ENCODE measurements at regions of chr2 and their contacts with region 1.

Region 1: DNA sequence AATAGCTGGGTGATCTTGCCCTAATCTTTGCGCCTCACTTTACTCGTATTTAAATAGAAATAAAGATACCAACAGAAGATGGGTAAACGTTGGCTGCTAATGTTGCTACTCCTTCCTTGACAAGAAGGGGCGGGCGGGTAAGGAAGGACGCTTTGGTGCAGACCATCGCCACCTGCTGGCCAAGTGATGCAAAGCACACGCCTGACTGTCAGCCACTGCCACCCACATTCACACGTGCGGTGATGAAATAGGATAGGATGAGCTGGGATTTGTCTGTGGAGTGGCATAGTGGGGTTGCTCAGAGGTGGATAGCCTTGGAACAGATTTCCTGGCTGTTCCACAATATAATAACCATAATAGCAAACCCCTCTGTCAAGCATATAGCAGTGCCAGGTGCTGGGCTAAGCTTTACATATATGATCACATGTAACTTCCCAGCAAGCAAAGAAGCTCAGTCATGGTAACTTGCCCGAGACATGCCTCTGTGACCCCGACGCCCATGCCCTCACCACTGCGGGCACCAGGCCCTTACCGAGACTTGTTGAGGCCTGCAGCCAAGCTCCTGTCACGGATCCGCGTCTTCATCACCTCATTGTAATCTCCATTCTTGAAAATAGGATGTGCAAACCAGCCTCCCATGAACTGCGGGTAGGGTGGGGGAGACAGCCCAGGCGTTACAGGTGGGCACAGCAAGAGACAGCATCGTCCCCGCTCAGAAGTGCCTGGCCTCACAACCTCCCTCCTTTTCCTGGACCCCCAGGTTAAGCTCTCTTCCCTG is 39.3 kb downstream of the LCT start:
- DNase-seq: peak; percentile 71
- H3K4me3 ChIP-seq: no peak overlapping the region
- H3K27ac ChIP-seq: no peak overlapping the region
- H3K4me1 ChIP-seq: no peaks in the 10 kb centered on the region
- H3K27me3 ChIP-seq: no peaks in the 10 kb centered on the region
- CTCF ChIP-seq: peak; percentile 95 to 96
- POLR2A ChIP-seq: no peak

Region 2: DNA sequence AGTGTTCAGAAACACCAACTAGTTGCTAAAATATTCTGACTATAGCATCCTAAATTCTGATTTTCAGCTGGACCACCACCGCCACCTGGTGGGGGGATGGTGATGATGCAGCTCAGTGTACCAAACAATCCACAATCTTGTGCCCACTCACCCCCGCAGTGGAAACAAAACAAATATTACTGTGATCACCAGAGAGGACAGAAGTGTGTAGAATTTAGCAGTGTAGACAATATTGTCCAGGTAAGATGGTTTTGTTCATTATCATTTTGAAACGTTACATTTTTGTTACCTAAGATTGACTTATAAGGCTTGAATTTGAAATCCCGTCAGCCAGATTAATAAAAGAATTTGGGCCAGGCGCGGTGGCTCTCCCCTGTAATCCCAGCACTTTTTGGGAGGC is 87.7 kb before region 1 on chr2:
- CTCF ChIA-PET with region 1: interaction called, 10 read pairs
- POLR2A ChIA-PET with region 1: no interaction called
- dilution Hi-C with region 1: no loop called
- intact Hi-C with region 1: no loop called
- DNase-seq: peak; percentile 60
- H3K4me3 ChIP-seq: no peak overlapping the region
- H3K27ac ChIP-seq: no peak overlapping the region
- H3K4me1 ChIP-seq: no peaks in the 10 kb centered on the region
- H3K27me3 ChIP-seq: no peaks in the 10 kb centered on the region
- CTCF ChIP-seq: peak; percentile 76 to 88
- POLR2A ChIP-seq: no peak

Region 3: GRCh38 chr2:135762022-135762421 is 35.7 kb before region 1 on chr2:
- CTCF ChIA-PET with region 1: interaction called, 11 read pairs
- POLR2A ChIA-PET with region 1: no interaction called
- dilution Hi-C with region 1: no loop called
- intact Hi-C with region 1: no loop called
- DNase-seq: peak; percentile 23
- H3K4me3 ChIP-seq: no peak overlapping the region
- H3K27ac ChIP-seq: no peak overlapping the region
- H3K4me1 ChIP-seq: peaks cover 18% of the 10 kb centered on the region
- H3K27me3 ChIP-seq: no peaks in the 10 kb centered on the region
- CTCF ChIP-seq: no peak
- POLR2A ChIP-seq: no peak

Region 4: GRCh38 chr2:135839713-135840112 is 42.0 kb after region 1 on chr2:
- CTCF ChIA-PET with region 1: interaction called, 19 read pairs
- POLR2A ChIA-PET with region 1: no interaction called
- dilution Hi-C with region 1: no loop called
- intact Hi-C with region 1: no loop called
- DNase-seq: peak; percentile 73
- H3K4me3 ChIP-seq: no peak overlapping the region
- H3K27ac ChIP-seq: no peak overlapping the region
- H3K4me1 ChIP-seq: peaks cover 8% of the 10 kb centered on the region
- H3K27me3 ChIP-seq: no peaks in the 10 kb centered on the region
- CTCF ChIP-seq: no peak
- POLR2A ChIP-seq: no peak